Stomach (tissue), 19 donors: ENCODE measurements at regions of chr16 and their contacts with region 1.

Region 1: GRCh38 chr16:57167953-57168352 is 17.9 kb downstream of the PSME3IP1 start:
- DNase-seq: peak in 1 of 2 donors; percentile 85
- H3K4me3 ChIP-seq: no peak overlapping the region
- H3K27ac ChIP-seq: no peak overlapping the region
- H3K4me1 ChIP-seq: peaks cover 0 to 23% (median 10%) of the 10 kb centered on the region in 4 donors
- H3K27me3 ChIP-seq: no peaks in the 10 kb centered on the region
- CTCF ChIP-seq: peak in 3 of 7 experiments; percentile 10 to 46 (median 37)
- EP300 ChIP-seq: no peak
- POLR2A ChIP-seq: no peak

Region 2: DNA sequence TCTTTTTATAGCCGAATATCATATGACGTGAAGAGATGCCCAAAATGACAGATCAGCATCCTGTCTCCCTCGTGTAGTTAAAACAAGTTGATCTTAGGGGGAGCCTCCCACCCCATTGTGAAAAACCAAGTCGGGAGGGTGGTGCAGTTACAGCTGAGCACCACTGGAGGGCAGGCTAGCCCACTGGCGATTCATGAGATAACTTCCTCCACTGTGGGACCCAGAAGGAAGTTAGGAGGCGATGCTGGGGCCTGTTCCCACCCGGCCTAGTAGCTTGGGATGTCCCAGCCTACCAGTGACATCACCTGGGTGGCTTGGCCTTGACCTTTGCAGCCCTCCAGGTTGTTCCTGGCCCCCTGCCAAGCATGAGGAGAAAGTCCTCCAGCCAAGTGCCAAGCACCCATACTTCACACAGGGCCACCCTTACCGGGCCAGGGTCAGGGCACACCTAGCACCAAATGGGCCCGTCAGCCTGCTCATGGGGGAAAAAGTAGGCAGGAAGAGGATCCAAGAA is 83.6 kb before region 1 on chr16:
- intact Hi-C with region 1: loop called (anchors 10 kb)
- DNase-seq: peak; percentile 65 to 91
- H3K4me3 ChIP-seq: no peak overlapping the region
- H3K27ac ChIP-seq: peak overlapping the region in 2 of 5 donors; percentile 19 to 45
- H3K4me1 ChIP-seq: peaks cover 0 to 10% (median 6%) of the 10 kb centered on the region in 4 donors
- H3K27me3 ChIP-seq: no peaks in the 10 kb centered on the region
- CTCF ChIP-seq: peak in 5 of 7 experiments; percentile 89 to 99 (median 98)
- EP300 ChIP-seq: no peak
- POLR2A ChIP-seq: no peak

Region 3: GRCh38 chr16:57325458-57325857 is 157.5 kb after region 1 on chr16:
- intact Hi-C with region 1: no loop called
- DNase-seq: no peak
- H3K4me3 ChIP-seq: no peak overlapping the region
- H3K27ac ChIP-seq: no peak overlapping the region
- H3K4me1 ChIP-seq: no peaks in the 10 kb centered on the region
- H3K27me3 ChIP-seq: no peaks in the 10 kb centered on the region
- CTCF ChIP-seq: no peak
- EP300 ChIP-seq: no peak
- POLR2A ChIP-seq: no peak